ENCODE measurements at regions of chr15 and their contacts with region 1.

Region 1: DNA sequence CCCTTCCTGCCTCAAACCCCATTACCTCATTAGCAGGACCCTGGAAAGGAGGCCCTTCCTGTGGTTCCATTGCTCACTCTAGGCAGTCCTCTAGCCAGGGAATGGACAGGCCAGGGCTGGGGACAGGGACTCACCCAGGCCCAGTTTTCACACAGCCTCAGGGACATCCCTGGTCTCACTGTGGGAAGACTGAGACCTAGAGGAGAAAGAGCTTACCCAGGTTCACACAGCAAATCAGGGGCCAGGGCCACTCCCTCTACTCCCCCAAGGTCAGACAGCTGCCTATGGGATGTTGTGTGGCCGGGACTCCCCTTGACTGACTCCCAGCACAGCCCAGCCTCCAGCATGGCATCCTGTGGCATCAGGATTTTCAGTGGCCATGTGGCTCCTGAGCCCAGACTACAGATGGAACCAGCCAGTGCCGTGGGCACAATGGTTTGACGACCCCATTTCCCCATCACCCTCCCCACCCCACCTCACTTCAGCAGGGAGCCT is 49.3 kb downstream of the ADAMTS7 start:
- DNase-seq: no peak
- H3K4me3 ChIP-seq: no peak overlapping the region
- H3K27ac ChIP-seq: peak overlapping the region in 3 of 4 donors; percentile 8 to 45 (median 21)
- H3K4me1 ChIP-seq: peaks cover 3 to 14% (median 5%) of the 10 kb centered on the region in 4 donors
- H3K27me3 ChIP-seq: no peaks in the 10 kb centered on the region
- CTCF ChIP-seq: no peak
- EP300 ChIP-seq: no peak
- POLR2A ChIP-seq: no peak

Region 2: DNA sequence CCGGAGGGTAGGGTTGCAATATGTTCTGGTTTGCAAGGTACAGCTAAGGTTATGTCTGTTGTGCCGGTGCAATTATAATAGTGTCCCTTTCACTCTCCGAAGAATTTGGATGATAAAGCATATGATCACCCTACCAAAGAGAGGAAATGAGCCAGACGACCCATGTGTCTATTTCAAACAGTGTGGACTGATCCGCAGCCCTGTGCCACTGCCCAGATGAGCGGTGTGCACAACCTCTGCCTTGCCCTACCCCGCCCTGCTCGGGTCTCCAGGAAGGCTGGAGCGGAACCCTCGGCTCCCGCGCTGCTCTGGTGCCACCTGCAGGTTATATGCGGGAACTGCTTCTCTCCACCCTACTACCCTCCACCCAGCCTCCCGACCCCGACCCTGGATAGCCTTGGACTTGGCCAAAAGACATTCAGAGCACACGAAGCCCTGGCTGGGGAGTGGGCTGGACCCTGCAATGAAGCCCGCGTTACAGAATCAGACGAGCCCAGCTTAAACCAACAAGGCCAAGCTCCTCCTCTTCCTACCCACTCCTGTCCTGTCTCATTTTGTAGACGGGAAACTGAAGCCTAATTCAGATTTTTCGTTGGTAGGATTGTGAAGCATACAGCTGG is 52.6 kb before region 1 on chr15:
- in situ Hi-C with region 1: no loop called
- intact Hi-C with region 1: no loop called
- DNase-seq: peak; percentile 75
- H3K4me3 ChIP-seq: peak overlapping the region in 1 of 4 donors; percentile 17
- H3K27ac ChIP-seq: no peak overlapping the region
- H3K4me1 ChIP-seq: peaks cover 0 to 6% (median 1%) of the 10 kb centered on the region in 4 donors
- H3K27me3 ChIP-seq: peaks cover 21% of the 10 kb centered on the region
- CTCF ChIP-seq: peak; percentile 87 to 91 (median 88)
- EP300 ChIP-seq: no peak
- POLR2A ChIP-seq: no peak

Region 3: GRCh38 chr15:78808550-78808949 is 46.6 kb after region 1 on chr15:
- in situ Hi-C with region 1: no loop called
- intact Hi-C with region 1: loop called (anchors 2 kb)
- DNase-seq: no peak
- H3K4me3 ChIP-seq: no peak overlapping the region
- H3K27ac ChIP-seq: no peak overlapping the region
- H3K4me1 ChIP-seq: peaks cover 0 to 24% (median 18%) of the 10 kb centered on the region in 4 donors
- H3K27me3 ChIP-seq: peaks cover 32% of the 10 kb centered on the region
- CTCF ChIP-seq: peak; percentile 18 to 41 (median 22)
- EP300 ChIP-seq: no peak
- POLR2A ChIP-seq: no peak

Measured in transverse colon (tissue), 4 donors.